GM12878 (cell line): ENCODE measurements at regions of chr4 and their contacts with region 1.

Region 1: DNA sequence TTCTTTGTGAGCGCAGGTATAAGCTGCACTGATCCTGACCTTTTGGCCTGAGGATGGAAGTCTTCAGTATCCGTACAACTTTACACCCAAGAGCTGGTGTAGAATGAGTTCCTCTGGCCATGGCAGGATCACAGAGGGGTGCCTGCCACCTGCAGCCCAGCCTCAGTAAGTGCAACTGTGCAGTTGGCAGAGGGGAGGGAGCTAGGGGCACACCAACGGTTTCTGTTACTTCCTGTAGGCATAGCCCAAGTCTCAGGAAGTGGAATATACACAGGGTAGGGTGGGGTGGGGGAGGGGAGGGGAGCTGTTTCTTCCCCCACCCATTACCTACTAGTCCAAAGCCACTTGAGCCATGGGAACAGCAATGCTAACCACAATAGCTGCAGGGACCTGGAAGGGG is 85.4 kb upstream of the GBA3 start:
- DNase-seq: no peak
- ATAC-seq: peak; percentile 93
- H3K4me3 ChIP-seq: no peak overlapping the region
- H3K27ac ChIP-seq: no peak overlapping the region
- H3K4me1 ChIP-seq: no peaks in the 10 kb centered on the region
- H3K27me3 ChIP-seq: no peaks in the 10 kb centered on the region
- CTCF ChIP-seq: peak; percentile 15 to 61 (median 56); a peak in 5 of 6 replicates
- EP300 ChIP-seq: no peak
- POLR2A ChIP-seq: no peak
- RAD21 ChIP-seq: peak; percentile 30; the same call in 1 of the 2 replicates

Region 2: GRCh38 chr4:22045051-22045630 is 562.2 kb before region 1 on chr4:
- CTCF ChIA-PET with region 1: no interaction called
- POLR2A ChIA-PET with region 1: no interaction called
- RAD21 ChIA-PET with region 1: no interaction called
- SMC1A ChIA-PET with region 1: no interaction called
- in situ Hi-C with region 1: no loop called
- intact Hi-C with region 1: no loop called
- DNase-seq: no peak
- ATAC-seq: no peak
- H3K4me3 ChIP-seq: no peak overlapping the region
- H3K27ac ChIP-seq: no peak overlapping the region
- H3K4me1 ChIP-seq: no peaks in the 10 kb centered on the region
- H3K27me3 ChIP-seq: no peaks in the 10 kb centered on the region
- CTCF ChIP-seq: no peak
- EP300 ChIP-seq: no peak
- POLR2A ChIP-seq: no peak
- RAD21 ChIP-seq: no peak

Region 3: GRCh38 chr4:22410645-22411247 is 196.6 kb before region 1 on chr4:
- CTCF ChIA-PET with region 1: interaction called, 117 read pairs
- POLR2A ChIA-PET with region 1: interaction called, 4 read pairs
- RAD21 ChIA-PET with region 1: interaction called, 66 read pairs
- SMC1A ChIA-PET with region 1: interaction called, 101 read pairs
- in situ Hi-C with region 1: loop called (anchors 5 kb)
- intact Hi-C with region 1: loop called (anchors 1 kb)
- DNase-seq: no peak
- ATAC-seq: no peak
- H3K4me3 ChIP-seq: no peak overlapping the region
- H3K27ac ChIP-seq: no peak overlapping the region
- H3K4me1 ChIP-seq: no peaks in the 10 kb centered on the region
- H3K27me3 ChIP-seq: no peaks in the 10 kb centered on the region
- CTCF ChIP-seq: peak in 2 of 3 experiments; percentile 31 to 46; a peak in 4 of 6 replicates
- EP300 ChIP-seq: no peak
- POLR2A ChIP-seq: no peak
- RAD21 ChIP-seq: peak; percentile 34; the same call in 1 of the 2 replicates

Region 4: GRCh38 chr4:22444813-22445212 is 162.6 kb before region 1 on chr4:
- CTCF ChIA-PET with region 1: interaction called, 13 read pairs
- POLR2A ChIA-PET with region 1: no interaction called
- RAD21 ChIA-PET with region 1: interaction called, 14 read pairs
- SMC1A ChIA-PET with region 1: interaction called, 16 read pairs
- in situ Hi-C with region 1: no loop called
- intact Hi-C with region 1: no loop called
- DNase-seq: no peak
- ATAC-seq: no peak; the same call in 1 of the 3 replicates
- H3K4me3 ChIP-seq: no peak overlapping the region
- H3K27ac ChIP-seq: no peak overlapping the region
- H3K4me1 ChIP-seq: no peaks in the 10 kb centered on the region
- H3K27me3 ChIP-seq: no peaks in the 10 kb centered on the region
- CTCF ChIP-seq: no peak
- EP300 ChIP-seq: no peak
- POLR2A ChIP-seq: no peak
- RAD21 ChIP-seq: no peak

Region 5: DNA sequence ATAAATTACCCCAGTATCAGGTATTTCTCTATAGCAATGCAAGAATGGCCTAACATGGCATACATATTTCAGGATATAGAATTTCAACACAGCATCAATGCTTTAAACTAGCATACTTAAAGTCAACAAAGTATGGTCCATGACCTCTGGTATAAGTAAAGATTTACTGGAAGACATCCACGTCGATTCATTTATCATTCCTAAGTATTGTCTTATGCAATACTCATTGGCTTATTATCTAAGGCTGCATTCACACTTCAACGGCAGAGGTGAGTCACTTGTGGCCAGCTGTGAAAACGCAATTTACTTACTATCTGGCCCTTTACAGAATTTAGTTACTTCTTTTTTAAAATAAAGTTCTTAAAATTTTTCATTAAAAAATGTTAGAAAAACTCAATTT is 134.1 kb before region 1 on chr4:
- CTCF ChIA-PET with region 1: interaction called, 7 read pairs
- POLR2A ChIA-PET with region 1: interaction called, 3 read pairs
- RAD21 ChIA-PET with region 1: interaction called, 18 read pairs
- SMC1A ChIA-PET with region 1: interaction called, 16 read pairs
- in situ Hi-C with region 1: no loop called
- intact Hi-C with region 1: no loop called
- DNase-seq: no peak
- ATAC-seq: 0 out of 3 replicates have a peak, but pooled peaks have one; percentile 16
- H3K4me3 ChIP-seq: no peak overlapping the region
- H3K27ac ChIP-seq: no peak overlapping the region
- H3K4me1 ChIP-seq: no peaks in the 10 kb centered on the region
- H3K27me3 ChIP-seq: no peaks in the 10 kb centered on the region
- CTCF ChIP-seq: no peak
- EP300 ChIP-seq: no peak
- POLR2A ChIP-seq: no peak
- RAD21 ChIP-seq: no peak

Region 6: DNA sequence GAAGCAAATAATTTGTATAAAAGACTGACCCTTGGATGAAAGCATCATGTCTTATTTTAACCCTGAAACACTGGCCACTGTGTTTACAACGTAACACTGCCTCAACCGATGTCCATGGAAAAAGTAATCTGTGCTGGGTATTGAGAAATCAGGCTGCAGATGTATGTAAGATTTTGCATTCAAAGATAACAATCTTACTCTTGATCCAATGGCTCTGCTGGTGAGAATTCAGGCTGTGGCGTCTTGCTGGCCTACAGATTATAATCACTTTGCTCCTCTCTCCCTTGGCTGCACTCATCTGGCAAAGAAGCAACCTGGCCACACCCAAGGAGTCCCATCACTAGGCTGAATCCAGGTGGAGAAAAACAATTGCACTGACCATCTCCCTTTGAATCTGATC is 99.0 kb before region 1 on chr4:
- CTCF ChIA-PET with region 1: interaction called, 12 read pairs
- POLR2A ChIA-PET with region 1: interaction called, 11 read pairs
- RAD21 ChIA-PET with region 1: interaction called, 16 read pairs
- SMC1A ChIA-PET with region 1: interaction called, 44 read pairs
- in situ Hi-C with region 1: no loop called
- intact Hi-C with region 1: no loop called
- DNase-seq: no peak
- ATAC-seq: no peak
- H3K4me3 ChIP-seq: no peak overlapping the region
- H3K27ac ChIP-seq: no peak overlapping the region
- H3K4me1 ChIP-seq: no peaks in the 10 kb centered on the region
- H3K27me3 ChIP-seq: no peaks in the 10 kb centered on the region
- CTCF ChIP-seq: no peak
- EP300 ChIP-seq: no peak
- POLR2A ChIP-seq: no peak
- RAD21 ChIP-seq: no peak

Region 7: DNA sequence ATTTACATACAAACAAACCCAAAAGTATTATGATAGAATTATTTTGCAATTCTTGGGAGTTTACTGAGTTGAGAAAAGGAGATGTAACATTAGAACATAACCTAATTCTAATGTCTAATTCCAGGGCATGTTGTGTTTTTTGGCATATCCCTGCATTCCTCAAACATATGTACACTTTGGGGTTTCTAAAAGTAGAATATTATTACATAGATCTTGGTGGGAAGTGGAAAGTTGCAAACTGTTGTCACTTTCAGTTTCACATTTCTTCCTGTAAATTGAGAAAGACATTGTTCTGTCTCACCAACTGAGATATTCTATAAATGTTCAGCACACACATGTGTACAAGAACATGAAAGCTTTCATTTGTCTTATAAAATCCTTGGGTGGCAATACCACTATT is 60.9 kb after region 1 on chr4:
- CTCF ChIA-PET with region 1: interaction called, 8 read pairs
- POLR2A ChIA-PET with region 1: interaction called, 3 read pairs
- RAD21 ChIA-PET with region 1: interaction called, 11 read pairs
- SMC1A ChIA-PET with region 1: interaction called, 9 read pairs
- in situ Hi-C with region 1: no loop called
- intact Hi-C with region 1: no loop called
- DNase-seq: no peak
- ATAC-seq: peak; percentile 48
- H3K4me3 ChIP-seq: no peak overlapping the region
- H3K27ac ChIP-seq: no peak overlapping the region
- H3K4me1 ChIP-seq: no peaks in the 10 kb centered on the region
- H3K27me3 ChIP-seq: no peaks in the 10 kb centered on the region
- CTCF ChIP-seq: no peak
- EP300 ChIP-seq: no peak
- POLR2A ChIP-seq: no peak
- RAD21 ChIP-seq: no peak

Region 8: GRCh38 chr4:22794732-22795131 is 187.3 kb after region 1 on chr4:
- CTCF ChIA-PET with region 1: no interaction called
- POLR2A ChIA-PET with region 1: no interaction called
- RAD21 ChIA-PET with region 1: no interaction called
- SMC1A ChIA-PET with region 1: no interaction called
- in situ Hi-C with region 1: no loop called
- intact Hi-C with region 1: no loop called
- DNase-seq: no peak
- ATAC-seq: no peak
- H3K4me3 ChIP-seq: no peak overlapping the region
- H3K27ac ChIP-seq: no peak overlapping the region
- H3K4me1 ChIP-seq: no peaks in the 10 kb centered on the region
- H3K27me3 ChIP-seq: no peaks in the 10 kb centered on the region
- CTCF ChIP-seq: no peak
- EP300 ChIP-seq: no peak
- POLR2A ChIP-seq: no peak
- RAD21 ChIP-seq: no peak

Region 9: GRCh38 chr4:22921936-22922335 is 314.6 kb after region 1 on chr4:
- CTCF ChIA-PET with region 1: no interaction called
- POLR2A ChIA-PET with region 1: no interaction called
- RAD21 ChIA-PET with region 1: no interaction called
- SMC1A ChIA-PET with region 1: no interaction called
- in situ Hi-C with region 1: no loop called
- intact Hi-C with region 1: no loop called
- DNase-seq: no peak
- ATAC-seq: no peak
- H3K4me3 ChIP-seq: no peak overlapping the region
- H3K27ac ChIP-seq: no peak overlapping the region
- H3K4me1 ChIP-seq: no peaks in the 10 kb centered on the region
- H3K27me3 ChIP-seq: no peaks in the 10 kb centered on the region
- CTCF ChIP-seq: no peak
- EP300 ChIP-seq: no peak
- POLR2A ChIP-seq: no peak
- RAD21 ChIP-seq: no peak